Activated B cell treated with CpG ODN at 0.5 μM for 24 hours (primary cell): ENCODE measurements at regions of chr19 and their contacts with region 1.

Region 1: GRCh38 chr19:4208385-4209094 is 20.8 kb upstream of the EBI3 start:
- DNase-seq: no peak
- ATAC-seq: no peak
- H3K4me3 Mint-ChIP-seq: no peak overlapping the region
- H3K27ac Mint-ChIP-seq: no peak overlapping the region
- H3K4me1 Mint-ChIP-seq: peaks cover 3% of the 10 kb centered on the region
- H3K27me3 Mint-ChIP-seq: peaks cover 2% of the 10 kb centered on the region
- CTCF ChIP-seq: no peak

Region 2: GRCh38 chr19:3700221-3701032 is 508.1 kb before region 1 on chr19 and contains the start of gene PIP5K1C:
- CTCF ChIA-PET with region 1: no interaction called
- POLR2A ChIA-PET with region 1: no interaction called
- intact Hi-C with region 1: loop called (anchors 10 kb)
- DNase-seq: peak; percentile 96
- ATAC-seq: peak; percentile 98
- H3K4me3 Mint-ChIP-seq: peak within 1 kb of the TSS; percentile 89
- H3K27ac Mint-ChIP-seq: peak within 1 kb of the TSS; percentile 65
- H3K4me1 Mint-ChIP-seq: peaks cover 37% of the 10 kb centered on the region
- H3K27me3 Mint-ChIP-seq: no peaks in the 10 kb centered on the region
- CTCF ChIP-seq: no peak
- total RNA-seq, gene PIP5K1C: 28.3 and 31.1 TPM in 2 replicates

Region 3: DNA sequence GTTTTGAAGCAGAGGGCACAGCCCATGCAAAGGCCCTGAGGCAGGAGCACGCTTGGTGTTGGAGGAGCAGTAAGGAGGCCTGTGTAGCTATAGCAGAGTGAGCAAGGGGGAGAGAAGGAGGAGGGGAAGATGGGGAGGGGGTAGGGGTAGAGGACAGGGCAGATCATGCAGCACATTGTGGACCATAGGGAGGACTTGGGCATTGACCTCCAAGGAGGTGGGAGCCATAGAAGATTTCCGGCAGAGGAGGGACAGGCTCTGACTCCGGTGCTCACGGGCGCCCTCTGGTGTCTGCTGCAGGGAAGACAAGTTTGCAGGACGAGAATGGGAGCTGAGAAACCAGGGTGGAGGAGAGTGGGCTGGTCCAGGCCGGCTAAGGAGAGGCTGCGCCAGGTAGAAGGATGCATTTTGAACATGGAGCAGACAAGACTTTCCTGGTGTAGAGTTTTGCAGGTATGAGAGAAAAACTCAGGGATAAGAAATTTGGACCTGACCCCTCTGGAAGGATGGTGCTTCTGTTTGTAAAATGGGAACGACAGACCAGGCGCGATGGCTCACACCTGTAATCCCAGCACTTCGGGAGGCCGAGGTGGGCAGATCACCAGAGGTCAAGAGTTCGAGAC is 68.8 kb before region 1 on chr19:
- CTCF ChIA-PET with region 1: interaction called, 4 read pairs
- POLR2A ChIA-PET with region 1: no interaction called
- intact Hi-C with region 1: loop called (anchors 1 kb)
- DNase-seq: peak; percentile 84
- ATAC-seq: peak; percentile 95
- H3K4me3 Mint-ChIP-seq: no peak overlapping the region
- H3K27ac Mint-ChIP-seq: peak overlapping the region; percentile 10
- H3K4me1 Mint-ChIP-seq: peaks cover 14% of the 10 kb centered on the region
- H3K27me3 Mint-ChIP-seq: peaks cover 5% of the 10 kb centered on the region
- CTCF ChIP-seq: peak; percentile 71

Region 4: DNA sequence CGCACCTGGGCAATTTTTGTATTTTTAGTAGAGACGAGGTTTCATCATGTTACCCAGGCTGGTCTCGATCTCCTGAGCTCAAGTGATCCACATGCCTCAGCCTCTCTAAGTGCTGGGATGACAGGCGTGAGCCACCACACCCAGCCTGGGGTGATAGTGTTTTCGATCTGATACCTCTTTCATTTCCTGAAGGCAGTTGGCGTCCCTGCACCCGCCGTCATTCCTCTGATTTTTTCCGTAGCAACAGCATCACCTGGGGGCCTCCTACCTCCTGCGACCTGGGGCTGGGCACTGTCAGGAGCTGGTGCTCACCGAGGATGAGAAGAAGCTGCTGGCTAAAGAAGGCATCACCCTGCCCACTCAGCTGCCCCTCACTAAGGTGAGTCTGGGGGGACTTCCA is 44.3 kb before region 1 on chr19:
- CTCF ChIA-PET with region 1: interaction called, 3 read pairs
- POLR2A ChIA-PET with region 1: no interaction called
- intact Hi-C with region 1: loop called (anchors 1 kb)
- DNase-seq: no peak
- ATAC-seq: no peak
- H3K4me3 Mint-ChIP-seq: no peak overlapping the region
- H3K27ac Mint-ChIP-seq: no peak overlapping the region
- H3K4me1 Mint-ChIP-seq: no peaks in the 10 kb centered on the region
- H3K27me3 Mint-ChIP-seq: peaks cover 10% of the 10 kb centered on the region
- CTCF ChIP-seq: no peak

Region 5: GRCh38 chr19:4232958-4233853 is 24.7 kb after region 1 on chr19:
- CTCF ChIA-PET with region 1: interaction called, 8 read pairs
- POLR2A ChIA-PET with region 1: no interaction called
- intact Hi-C with region 1: loop called (anchors 1 kb)
- DNase-seq: peak; percentile 71
- ATAC-seq: no peak
- H3K4me3 Mint-ChIP-seq: peak overlapping the region; percentile 60
- H3K27ac Mint-ChIP-seq: peak overlapping the region; percentile 62
- H3K4me1 Mint-ChIP-seq: peaks cover 16% of the 10 kb centered on the region
- H3K27me3 Mint-ChIP-seq: no peaks in the 10 kb centered on the region
- CTCF ChIP-seq: no peak